Right ventricle myocardium inferior (tissue), 1 donor: ENCODE measurements at regions of chr1 and their contacts with region 1.

Region 1: DNA sequence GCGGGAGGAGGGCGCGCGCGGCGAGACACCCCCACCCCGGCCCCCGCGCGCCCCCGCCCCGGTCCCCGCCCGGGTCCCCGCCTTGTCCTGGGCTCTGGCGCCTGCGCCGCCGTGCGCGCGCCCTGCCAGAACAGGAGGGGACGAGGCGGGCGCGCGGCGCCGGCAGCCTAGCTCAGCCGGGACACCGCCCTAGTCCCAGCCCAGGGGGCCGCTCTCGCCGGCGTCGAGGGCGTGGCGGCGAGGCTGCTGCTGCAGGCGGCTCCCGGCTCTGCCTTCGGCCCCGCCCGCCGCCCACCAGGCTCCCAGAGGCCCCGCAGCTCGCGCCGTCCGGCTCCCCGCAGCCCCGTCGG is at the start of gene RCAN3:
- DNase-seq: peak; percentile 93
- ATAC-seq: peak; percentile 98
- total RNA-seq, gene RCAN3: 5.9 TPM

Region 2: DNA sequence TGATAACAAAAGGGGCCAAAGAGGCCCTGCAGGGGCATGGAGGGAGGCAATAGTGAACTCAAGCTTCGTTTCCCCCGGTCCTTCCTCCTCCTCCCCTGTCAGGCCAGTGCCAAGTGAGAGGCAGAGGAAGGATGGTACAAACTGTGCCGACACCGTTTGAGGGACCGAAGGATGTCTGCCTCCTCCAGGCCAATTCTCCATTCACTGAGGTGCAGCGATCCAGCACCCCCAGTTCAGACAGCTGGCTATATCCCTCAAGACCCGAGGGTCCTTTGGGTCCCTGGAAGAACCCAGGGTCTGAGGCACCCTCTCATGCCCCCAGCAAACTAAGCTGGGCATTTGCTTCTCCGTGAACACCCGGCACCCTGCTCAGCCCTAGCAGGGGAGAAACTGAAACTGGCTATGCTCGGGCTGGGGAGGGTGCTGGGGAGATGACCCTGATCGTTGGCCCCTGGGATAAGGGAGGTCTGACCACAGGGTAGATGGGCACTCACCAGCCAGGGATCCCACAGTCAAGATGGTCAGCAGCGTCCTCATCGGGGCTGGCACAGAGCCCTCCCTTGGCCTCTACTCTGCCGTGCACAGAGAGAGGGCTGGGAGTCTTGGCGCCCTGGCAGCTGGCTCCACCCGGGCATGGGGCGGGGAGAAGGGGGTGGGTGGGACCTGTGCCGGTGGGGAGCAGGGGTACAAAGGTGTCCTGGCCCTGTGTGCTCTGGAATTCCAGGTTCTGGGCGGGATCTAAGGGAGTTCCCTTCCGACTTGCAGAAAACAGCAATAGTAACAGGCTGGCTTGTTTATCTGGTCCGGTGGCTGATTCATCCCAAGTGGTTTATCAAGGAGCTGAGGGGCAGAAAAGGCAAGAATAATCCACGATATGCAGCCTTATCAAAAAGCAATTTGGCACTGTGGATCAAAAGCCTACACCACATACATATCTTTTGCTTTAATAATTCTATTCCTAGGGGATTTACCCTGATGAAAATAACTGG is 359.8 kb before region 1 on chr1 and contains the start of gene IL22RA1:
- intact Hi-C with region 1: no loop called
- DNase-seq: no peak
- ATAC-seq: peak; percentile 35
- total RNA-seq, gene IL22RA1: 0.24 TPM

Region 3: GRCh38 chr1:24438423-24438901 is 64.2 kb before region 1 on chr1:
- intact Hi-C with region 1: loop called (anchors 2 kb)
- DNase-seq: peak; percentile 80
- ATAC-seq: peak; percentile 92